ENCODE measurements at regions of chr2 and their contacts with region 1.

Region 1: GRCh38 chr2:97710596-97711386 is 2.6 kb upstream of the ZAP70 start:
- DNase-seq: peak; percentile 54

Region 2: DNA sequence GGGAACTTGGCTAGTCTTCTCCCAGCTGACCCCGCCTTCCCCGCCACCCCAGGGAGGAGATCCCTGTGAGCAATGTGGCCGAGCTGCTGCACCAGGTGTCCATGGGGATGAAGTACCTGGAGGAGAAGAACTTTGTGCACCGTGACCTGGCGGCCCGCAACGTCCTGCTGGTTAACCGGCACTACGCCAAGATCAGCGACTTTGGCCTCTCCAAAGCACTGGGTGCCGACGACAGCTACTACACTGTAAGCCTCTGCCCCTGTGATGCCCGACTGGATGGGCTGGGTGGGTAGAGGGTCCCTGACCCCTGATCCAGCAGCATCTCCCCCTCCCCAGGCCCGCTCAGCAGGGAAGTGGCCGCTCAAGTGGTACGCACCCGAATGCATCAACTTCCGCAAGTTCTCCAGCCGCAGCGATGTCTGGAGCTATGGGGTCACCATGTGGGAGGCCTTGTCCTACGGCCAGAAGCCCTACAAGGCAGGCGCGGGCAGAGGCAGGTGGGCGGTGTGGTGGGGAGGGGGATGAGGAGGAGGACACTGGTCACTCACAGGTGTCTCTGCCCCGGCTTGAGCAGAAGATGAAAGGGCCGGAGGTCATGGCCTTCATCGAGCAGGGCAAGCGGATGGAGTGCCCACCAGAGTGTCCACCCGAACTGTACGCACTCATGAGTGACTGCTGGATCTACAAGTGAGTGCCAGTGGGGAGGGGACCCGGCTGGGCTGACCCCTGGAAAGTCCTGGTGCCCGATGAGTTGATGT is 26.8 kb after region 1 on chr2:
- intact Hi-C with region 1: no loop called
- DNase-seq: peak; percentile 66

Region 3: DNA sequence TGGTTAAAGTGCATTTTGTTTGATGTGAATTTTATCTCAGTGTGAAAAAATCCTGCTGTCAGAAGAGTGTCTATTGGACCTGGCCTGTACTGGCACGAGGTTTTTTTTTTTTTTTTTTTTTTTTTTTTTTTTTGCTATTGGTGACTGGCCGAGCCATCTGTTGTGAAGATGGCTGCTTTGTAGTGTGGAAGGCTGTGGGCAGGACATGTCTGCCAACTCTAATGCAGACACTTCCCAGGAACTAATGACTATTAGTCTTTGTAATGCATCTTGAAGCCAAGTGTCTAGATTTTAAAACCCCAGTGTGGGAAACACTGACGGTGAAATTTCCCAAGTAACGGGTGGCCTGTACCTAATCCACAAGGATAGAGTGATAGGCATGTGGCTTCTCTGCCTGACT is 36.9 kb after region 1 on chr2:
- intact Hi-C with region 1: loop called (anchors 1 kb)
- DNase-seq: no peak

Region 4: DNA sequence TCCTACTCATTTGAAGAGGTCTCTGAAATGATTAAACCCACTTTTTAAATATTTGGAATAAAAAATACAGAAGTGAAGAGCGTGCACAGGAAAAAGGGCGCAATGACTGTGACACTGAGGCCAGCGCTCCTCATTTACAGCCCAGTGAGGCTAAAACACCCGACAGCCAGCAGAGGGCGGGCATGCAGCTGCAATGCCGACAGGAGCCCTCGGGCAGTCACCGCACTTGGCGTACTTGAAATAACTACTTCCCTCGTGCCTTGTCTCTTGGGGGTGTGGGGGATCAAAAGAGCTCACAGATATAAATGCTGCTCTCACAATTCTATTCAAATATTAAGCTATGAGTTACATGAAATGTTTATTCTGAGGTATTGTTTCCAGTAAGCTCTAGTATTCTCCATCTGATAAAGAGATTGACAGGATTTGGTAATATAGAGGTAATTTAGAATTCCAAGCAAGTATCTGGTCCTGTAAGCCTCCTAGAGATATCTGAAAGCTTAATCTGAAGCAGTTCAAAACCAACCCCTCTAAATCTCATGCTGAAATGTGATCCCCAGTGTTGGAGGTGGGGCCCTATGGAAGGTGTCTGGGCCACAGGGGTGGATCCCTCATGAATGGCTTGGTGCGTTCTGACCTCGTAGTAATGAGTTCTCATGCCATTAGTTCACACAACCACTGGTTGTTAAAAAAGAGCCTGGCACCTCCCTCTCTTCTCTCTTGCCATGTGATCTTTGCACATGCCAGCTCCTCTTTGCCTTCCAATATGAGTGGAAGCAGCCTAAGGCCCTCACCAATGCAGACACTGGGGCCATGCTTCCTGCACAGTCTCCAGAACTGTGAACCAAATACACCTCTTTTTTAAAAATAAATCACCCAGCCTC is 96.2 kb after region 1 on chr2:
- intact Hi-C with region 1: no loop called
- DNase-seq: peak; percentile 90

Region 5: GRCh38 chr2:97819754-97820153 is 109.0 kb after region 1 on chr2:
- intact Hi-C with region 1: no loop called
- DNase-seq: no peak

Region 6: GRCh38 chr2:98233798-98234340 is 523.1 kb after region 1 on chr2:
- intact Hi-C with region 1: no loop called
- DNase-seq: no peak